Activated CD4-positive, alpha-beta T cell treated with anti-CD3 and anti-CD28 coated beads for 36 hours (primary cell): ENCODE measurements at regions of chr7 and their contacts with region 1.

Region 1: DNA sequence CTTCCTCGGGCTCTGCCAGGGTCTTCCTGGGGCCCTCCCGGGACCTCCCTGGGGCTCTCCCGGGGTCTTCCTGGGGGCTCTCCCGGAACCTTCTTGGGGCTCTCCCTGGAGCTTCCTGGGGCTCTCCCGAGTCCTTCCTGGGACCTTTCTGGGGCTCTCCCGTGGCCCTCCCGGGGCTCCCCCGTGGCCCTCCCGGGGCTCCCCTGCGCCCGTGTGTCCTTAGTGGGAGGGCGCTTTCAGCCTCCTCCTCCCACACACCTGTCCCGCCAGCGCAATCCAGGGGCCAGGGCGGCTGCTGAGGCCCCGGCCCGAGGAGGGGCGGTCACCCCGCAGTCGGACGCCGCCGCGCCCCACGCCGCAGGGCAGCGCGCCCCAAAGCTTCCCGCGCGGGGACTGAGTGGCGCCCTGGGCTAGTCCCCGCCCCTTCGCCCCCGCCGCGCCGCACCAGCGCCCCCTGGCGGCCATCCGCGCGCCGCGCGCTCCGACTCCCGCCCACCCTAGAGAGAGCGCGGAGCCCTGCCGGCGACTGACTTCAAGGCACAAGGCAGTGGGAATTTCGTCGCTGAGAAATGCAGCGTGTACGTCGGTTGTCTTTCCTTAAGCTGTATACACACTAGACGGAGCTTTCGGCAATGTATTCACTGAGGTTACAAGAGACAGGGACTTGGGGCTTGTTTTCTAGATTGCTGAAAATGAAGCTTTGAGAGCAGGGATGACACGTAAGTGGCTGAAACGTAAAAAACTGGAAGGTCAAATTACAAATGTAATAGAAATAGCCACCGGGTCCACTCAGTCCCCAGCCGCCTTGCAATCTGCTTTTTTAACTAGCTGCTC is 47.1 kb downstream of the INSIG1 start:
- DNase-seq: peak; percentile 89
- ATAC-seq: peak; percentile 86
- H3K4me3 Mint-ChIP-seq: peak overlapping the region; percentile 57
- H3K27ac Mint-ChIP-seq: peak overlapping the region; percentile 16
- H3K4me1 Mint-ChIP-seq: peaks cover 14% of the 10 kb centered on the region
- H3K27me3 Mint-ChIP-seq: peaks cover 4% of the 10 kb centered on the region

Region 2: GRCh38 chr7:155003376-155004214 is 341.2 kb before region 1 on chr7:
- CTCF ChIA-PET with region 1: no interaction called
- POLR2A ChIA-PET with region 1: no interaction called
- intact Hi-C with region 1: loop called (anchors 1 to 10 kb)
- DNase-seq: peak; percentile 91
- ATAC-seq: peak; percentile 82
- H3K4me3 Mint-ChIP-seq: peak overlapping the region; percentile 91
- H3K27ac Mint-ChIP-seq: peak overlapping the region; percentile 85
- H3K4me1 Mint-ChIP-seq: peaks cover 12% of the 10 kb centered on the region
- H3K27me3 Mint-ChIP-seq: no peaks in the 10 kb centered on the region

Region 3: DNA sequence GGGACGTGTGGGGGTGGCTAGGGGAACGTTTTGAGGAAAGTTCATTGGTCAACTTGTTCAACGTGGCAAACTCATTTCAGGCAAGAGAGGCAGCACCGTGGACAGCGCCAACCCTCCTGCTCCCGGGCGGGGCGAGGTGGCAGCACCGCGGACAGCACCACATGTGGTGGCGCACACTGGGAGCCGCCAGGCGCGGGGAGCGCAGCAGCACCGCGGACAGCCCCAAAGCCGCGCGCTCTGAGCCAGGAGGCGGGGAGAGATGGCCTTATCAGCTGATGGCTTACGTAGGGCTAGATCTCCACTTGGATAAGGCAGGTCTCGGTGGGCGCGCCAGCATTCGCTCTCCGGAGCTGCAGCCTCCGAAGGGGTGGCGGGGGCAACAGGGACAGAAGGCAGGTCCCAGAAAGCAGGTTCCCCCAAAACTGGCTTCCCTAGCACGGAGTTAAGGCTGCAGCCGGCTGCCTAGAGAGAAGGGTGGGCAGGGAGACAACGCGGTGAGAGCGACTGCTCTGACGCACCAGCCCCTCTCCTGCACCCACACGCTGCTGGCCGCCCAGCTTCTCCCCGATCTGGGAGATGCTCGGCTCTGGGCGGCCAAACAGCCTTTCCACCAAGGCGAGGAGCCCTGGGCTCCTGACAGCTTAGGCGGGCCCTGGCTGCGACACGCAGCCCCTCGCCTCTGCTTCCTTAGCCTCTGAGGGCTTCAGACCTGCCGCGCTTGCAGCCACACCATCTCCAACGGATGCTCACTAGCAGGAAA is 274.6 kb before region 1 on chr7 and contains the start of gene HTR5A:
- CTCF ChIA-PET with region 1: no interaction called
- POLR2A ChIA-PET with region 1: no interaction called
- intact Hi-C with region 1: loop called in 1 of 2 experiments (anchors 5 kb)
- DNase-seq: peak; percentile 93
- ATAC-seq: peak; percentile 100
- H3K4me3 Mint-ChIP-seq: no peak within 1 kb of the TSS
- H3K27ac Mint-ChIP-seq: no peak within 1 kb of the TSS
- H3K4me1 Mint-ChIP-seq: no peaks in the 10 kb centered on the region
- H3K27me3 Mint-ChIP-seq: peaks cover 32% of the 10 kb centered on the region
- total RNA-seq, gene HTR5A: not detected

Region 4: GRCh38 chr7:155190688-155191087 is 154.1 kb before region 1 on chr7:
- CTCF ChIA-PET with region 1: interaction called, 14 read pairs
- POLR2A ChIA-PET with region 1: no interaction called
- intact Hi-C with region 1: loop called (anchors 1 to 2 kb)
- DNase-seq: peak; percentile 82
- ATAC-seq: peak; percentile 64
- H3K4me3 Mint-ChIP-seq: no peak overlapping the region
- H3K27ac Mint-ChIP-seq: no peak overlapping the region
- H3K4me1 Mint-ChIP-seq: peaks cover 35% of the 10 kb centered on the region
- H3K27me3 Mint-ChIP-seq: peaks cover 5% of the 10 kb centered on the region

Region 5: GRCh38 chr7:155205368-155206317 is 139.2 kb before region 1 on chr7:
- CTCF ChIA-PET with region 1: interaction called, 4 read pairs
- POLR2A ChIA-PET with region 1: no interaction called
- intact Hi-C with region 1: loop called in 1 of 2 experiments (anchors 1 kb)
- DNase-seq: peak; percentile 95
- ATAC-seq: peak; percentile 84
- H3K4me3 Mint-ChIP-seq: peak overlapping the region; percentile 77
- H3K27ac Mint-ChIP-seq: peak overlapping the region; percentile 100
- H3K4me1 Mint-ChIP-seq: peaks cover 60% of the 10 kb centered on the region
- H3K27me3 Mint-ChIP-seq: no peaks in the 10 kb centered on the region

Region 6: GRCh38 chr7:155356323-155357105 is 11.7 kb after region 1 on chr7:
- CTCF ChIA-PET with region 1: interaction called, 14 read pairs
- POLR2A ChIA-PET with region 1: no interaction called
- intact Hi-C with region 1: no loop called
- DNase-seq: no peak
- ATAC-seq: no peak
- H3K4me3 Mint-ChIP-seq: no peak overlapping the region
- H3K27ac Mint-ChIP-seq: no peak overlapping the region
- H3K4me1 Mint-ChIP-seq: no peaks in the 10 kb centered on the region
- H3K27me3 Mint-ChIP-seq: peaks cover 36% of the 10 kb centered on the region